Esophagus muscularis mucosa (tissue), 4 donors: ENCODE measurements at regions of chr17 and their contacts with region 1.

Region 1: DNA sequence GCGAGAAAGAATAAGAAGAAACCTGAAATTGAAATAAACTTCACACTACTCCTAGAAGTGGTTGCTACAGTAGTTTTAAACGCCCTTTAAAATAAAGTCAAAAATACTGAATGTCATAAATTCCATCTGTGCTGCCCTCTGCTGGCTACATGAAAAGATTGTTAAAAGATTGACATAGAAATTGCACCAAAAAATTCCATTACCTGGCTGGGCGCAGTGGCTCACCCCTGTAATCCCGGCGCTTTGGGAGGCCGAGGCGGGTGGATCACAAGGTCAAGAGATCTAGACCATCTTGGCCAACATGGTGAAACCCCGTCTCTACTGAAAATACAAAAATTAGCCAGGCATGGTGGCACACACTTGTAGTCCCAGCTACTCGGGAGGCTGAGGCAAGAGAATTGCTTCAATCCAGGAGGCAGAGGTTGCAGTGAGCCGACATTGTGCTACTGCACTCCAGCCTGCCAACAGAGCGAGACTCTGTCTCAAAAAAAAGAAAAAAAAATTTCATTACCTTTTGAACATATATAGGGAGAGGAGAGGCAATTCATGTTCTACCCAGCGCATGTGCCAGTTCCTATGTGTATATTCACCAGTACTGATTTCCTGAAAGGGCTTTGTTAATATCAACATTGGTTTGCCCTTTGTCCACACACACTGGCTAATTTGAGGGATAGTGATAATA is 36.5 kb downstream of the CYTH1 start:
- DNase-seq: no peak
- H3K4me3 ChIP-seq: no peak overlapping the region
- H3K27ac ChIP-seq: peak overlapping the region in 1 of 4 donors; percentile 63
- H3K4me1 ChIP-seq: peaks cover 38 to 69% (median 57%) of the 10 kb centered on the region in 4 donors
- H3K27me3 ChIP-seq: no peaks in the 10 kb centered on the region
- CTCF ChIP-seq: peak; percentile 58 to 65 (median 62)
- EP300 ChIP-seq: no peak
- POLR2A ChIP-seq: no peak

Region 2: DNA sequence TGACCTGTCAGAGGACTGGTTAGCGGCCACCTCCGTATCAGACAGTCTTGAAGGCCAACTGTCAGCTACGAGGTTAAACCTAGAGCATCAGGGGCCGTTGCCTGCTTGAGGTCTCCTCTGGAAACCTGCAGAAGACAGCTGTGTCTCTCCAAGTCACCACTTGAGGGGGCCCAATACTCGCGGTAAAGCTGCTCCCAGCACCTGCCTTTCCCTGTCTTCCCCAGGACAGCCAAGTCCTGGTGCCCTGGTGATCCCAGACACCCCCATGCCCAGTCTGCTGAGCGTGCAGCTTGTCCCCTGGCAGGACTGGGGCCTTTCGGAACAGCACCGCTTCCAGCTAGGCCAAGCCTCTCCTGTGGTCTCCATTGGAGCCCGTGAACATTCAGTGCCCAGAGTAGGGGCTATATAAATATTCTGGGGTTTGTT is 248.4 kb before region 1 on chr17:
- intact Hi-C with region 1: loop called (anchors 5 kb)
- DNase-seq: no peak
- H3K4me3 ChIP-seq: no peak overlapping the region
- H3K27ac ChIP-seq: no peak overlapping the region
- H3K4me1 ChIP-seq: peaks cover 0 to 8% (median 0%) of the 10 kb centered on the region in 4 donors
- H3K27me3 ChIP-seq: peaks cover 0 to 17% (median 0%) of the 10 kb centered on the region in 4 donors
- CTCF ChIP-seq: peak; percentile 71 to 82 (median 75)
- EP300 ChIP-seq: no peak
- POLR2A ChIP-seq: no peak

Region 3: DNA sequence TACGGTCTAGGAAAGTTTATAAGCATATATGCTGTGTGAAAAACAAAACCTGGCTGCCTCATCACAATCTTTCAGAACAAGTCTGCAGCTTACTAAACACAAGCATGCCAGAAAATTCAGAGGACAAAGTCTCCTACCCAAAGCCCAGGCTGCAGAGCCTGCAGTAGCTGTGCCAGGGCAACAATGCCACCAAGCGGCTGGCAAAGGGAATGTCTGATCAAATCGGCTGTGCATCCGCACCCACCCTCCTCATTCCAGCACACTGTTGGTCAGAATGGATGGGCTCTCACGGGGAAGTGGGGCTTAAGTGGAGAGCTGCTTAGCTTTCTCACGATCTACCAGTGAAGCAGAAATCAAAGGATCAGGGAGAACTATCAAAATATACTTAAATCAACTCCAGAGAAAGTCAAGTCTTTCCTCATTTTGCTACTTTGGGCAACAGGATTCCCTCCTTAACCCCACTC is 37.0 kb before region 1 on chr17:
- intact Hi-C with region 1: loop called (anchors 5 kb)
- DNase-seq: no peak
- H3K4me3 ChIP-seq: no peak overlapping the region
- H3K27ac ChIP-seq: no peak overlapping the region
- H3K4me1 ChIP-seq: peaks cover 6 to 50% (median 44%) of the 10 kb centered on the region in 4 donors
- H3K27me3 ChIP-seq: no peaks in the 10 kb centered on the region
- CTCF ChIP-seq: peak; percentile 78 to 86 (median 84)
- EP300 ChIP-seq: no peak
- POLR2A ChIP-seq: no peak